ENCODE measurements at regions of chr19 and their contacts with region 1.

Region 1: DNA sequence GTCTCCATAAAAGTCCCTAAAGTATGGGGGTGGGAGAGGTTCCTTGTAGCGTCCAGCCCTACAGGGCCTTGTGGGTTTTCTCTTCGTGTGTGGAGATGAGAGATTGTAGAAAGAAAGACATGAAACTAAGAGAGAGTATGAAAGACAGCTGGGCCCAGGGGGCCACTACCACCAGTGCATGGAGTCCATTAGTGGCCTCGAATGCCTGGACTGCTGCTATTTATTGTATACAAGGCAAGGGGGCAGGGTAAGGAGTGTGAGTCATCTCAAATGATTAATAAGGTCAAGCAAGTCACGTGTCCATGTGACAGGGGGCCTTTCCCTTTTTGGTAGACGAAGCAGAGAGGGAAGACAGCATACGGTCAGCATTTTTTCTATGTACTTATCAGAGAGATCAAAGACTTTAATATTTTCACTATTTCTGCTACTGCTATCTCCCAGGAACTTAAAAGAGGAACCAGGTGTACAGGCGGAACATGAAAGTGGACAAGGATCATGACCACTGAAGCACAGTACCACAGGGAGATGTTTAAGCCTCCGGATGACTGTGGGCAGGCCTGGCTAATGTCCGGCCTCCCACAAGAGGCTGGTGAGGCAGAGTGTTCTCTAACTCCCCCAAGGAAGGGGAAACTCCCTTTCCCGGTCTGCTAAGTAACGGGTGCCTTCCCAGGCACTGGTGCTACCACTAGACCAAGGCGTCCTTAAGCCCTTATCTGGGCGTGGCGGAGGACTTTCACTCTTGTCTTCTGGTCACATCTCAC is 25.5 kb downstream of the FGF21 start:
- DNase-seq: peak; percentile 77 to 86
- H3K4me3 ChIP-seq: no peak overlapping the region
- H3K4me3 Mint-ChIP-seq: no peak overlapping the region
- H3K27ac Mint-ChIP-seq: peak overlapping the region; percentile 26
- H3K4me1 ChIP-seq: peaks cover 23% of the 10 kb centered on the region
- H3K4me1 Mint-ChIP-seq: peaks cover 18% of the 10 kb centered on the region
- H3K27me3 ChIP-seq: no peaks in the 10 kb centered on the region
- H3K27me3 Mint-ChIP-seq: no peaks in the 10 kb centered on the region
- CTCF ChIP-seq: no peak

Region 2: GRCh38 chr19:48731452-48731851 is 49.4 kb before region 1 on chr19:
- CTCF ChIA-PET with region 1: no interaction called
- POLR2A ChIA-PET with region 1: no interaction called
- intact Hi-C with region 1: no loop called
- DNase-seq: no peak
- H3K4me3 ChIP-seq: no peak overlapping the region
- H3K4me3 Mint-ChIP-seq: no peak overlapping the region
- H3K27ac Mint-ChIP-seq: no peak overlapping the region
- H3K4me1 ChIP-seq: no peaks in the 10 kb centered on the region
- H3K4me1 Mint-ChIP-seq: peaks cover 11% of the 10 kb centered on the region
- H3K27me3 ChIP-seq: no peaks in the 10 kb centered on the region
- H3K27me3 Mint-ChIP-seq: no peaks in the 10 kb centered on the region
- CTCF ChIP-seq: no peak

Region 3: DNA sequence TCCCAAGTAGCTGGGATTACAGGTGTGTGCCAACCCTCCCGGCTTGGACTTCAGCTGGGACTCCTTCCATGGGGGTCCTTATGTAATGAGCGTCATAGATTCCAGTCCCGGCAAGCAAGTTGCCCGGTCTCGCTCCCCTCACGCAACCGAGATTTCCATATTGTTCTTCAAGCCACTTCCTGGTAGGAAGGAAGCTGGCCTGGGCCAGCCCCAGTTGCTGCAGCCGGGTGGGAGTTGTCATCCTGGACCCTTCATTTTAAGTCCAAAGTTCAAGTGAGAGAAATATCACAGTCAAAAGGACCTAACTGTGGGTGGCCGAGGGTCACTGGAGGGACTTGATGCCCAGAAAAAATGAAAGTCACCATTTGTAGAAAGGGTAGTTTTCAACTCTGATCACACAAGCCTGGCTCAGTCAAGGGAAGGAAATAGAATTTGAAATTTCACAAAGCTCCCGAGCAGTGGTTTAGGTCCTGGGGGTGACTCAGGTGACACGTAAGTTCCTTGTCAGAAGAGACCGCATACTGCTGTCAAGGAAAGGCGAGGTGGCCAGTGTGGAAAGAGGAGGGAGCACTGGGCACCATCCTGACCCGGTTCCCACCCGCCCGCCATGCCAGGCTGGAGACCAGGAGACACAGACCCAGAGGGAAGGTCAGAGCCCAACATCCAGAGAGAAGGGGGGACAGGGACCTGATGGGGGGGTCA is 20.2 kb before region 1 on chr19:
- CTCF ChIA-PET with region 1: no interaction called
- POLR2A ChIA-PET with region 1: no interaction called
- intact Hi-C with region 1: no loop called
- DNase-seq: no peak
- H3K4me3 ChIP-seq: no peak overlapping the region
- H3K4me3 Mint-ChIP-seq: no peak overlapping the region
- H3K27ac Mint-ChIP-seq: no peak overlapping the region
- H3K4me1 ChIP-seq: peaks cover 10% of the 10 kb centered on the region; the same call in 1 of the 2 replicates
- H3K4me1 Mint-ChIP-seq: no peaks in the 10 kb centered on the region
- H3K27me3 ChIP-seq: no peaks in the 10 kb centered on the region
- H3K27me3 Mint-ChIP-seq: no peaks in the 10 kb centered on the region
- CTCF ChIP-seq: no peak

Region 4: GRCh38 chr19:48881741-48882657 is 101.2 kb after region 1 on chr19:
- CTCF ChIA-PET with region 1: no interaction called
- POLR2A ChIA-PET with region 1: interaction called, 12 read pairs
- intact Hi-C with region 1: no loop called
- DNase-seq: peak; percentile 52 to 61
- H3K4me3 ChIP-seq: no peak overlapping the region
- H3K4me3 Mint-ChIP-seq: no peak overlapping the region
- H3K27ac Mint-ChIP-seq: no peak overlapping the region
- H3K4me1 ChIP-seq: peaks cover 22% of the 10 kb centered on the region
- H3K4me1 Mint-ChIP-seq: peaks cover 5% of the 10 kb centered on the region
- H3K27me3 ChIP-seq: no peaks in the 10 kb centered on the region
- H3K27me3 Mint-ChIP-seq: no peaks in the 10 kb centered on the region
- CTCF ChIP-seq: no peak